ENCODE measurements at regions of chr18 and their contacts with region 1.

Region 1: DNA sequence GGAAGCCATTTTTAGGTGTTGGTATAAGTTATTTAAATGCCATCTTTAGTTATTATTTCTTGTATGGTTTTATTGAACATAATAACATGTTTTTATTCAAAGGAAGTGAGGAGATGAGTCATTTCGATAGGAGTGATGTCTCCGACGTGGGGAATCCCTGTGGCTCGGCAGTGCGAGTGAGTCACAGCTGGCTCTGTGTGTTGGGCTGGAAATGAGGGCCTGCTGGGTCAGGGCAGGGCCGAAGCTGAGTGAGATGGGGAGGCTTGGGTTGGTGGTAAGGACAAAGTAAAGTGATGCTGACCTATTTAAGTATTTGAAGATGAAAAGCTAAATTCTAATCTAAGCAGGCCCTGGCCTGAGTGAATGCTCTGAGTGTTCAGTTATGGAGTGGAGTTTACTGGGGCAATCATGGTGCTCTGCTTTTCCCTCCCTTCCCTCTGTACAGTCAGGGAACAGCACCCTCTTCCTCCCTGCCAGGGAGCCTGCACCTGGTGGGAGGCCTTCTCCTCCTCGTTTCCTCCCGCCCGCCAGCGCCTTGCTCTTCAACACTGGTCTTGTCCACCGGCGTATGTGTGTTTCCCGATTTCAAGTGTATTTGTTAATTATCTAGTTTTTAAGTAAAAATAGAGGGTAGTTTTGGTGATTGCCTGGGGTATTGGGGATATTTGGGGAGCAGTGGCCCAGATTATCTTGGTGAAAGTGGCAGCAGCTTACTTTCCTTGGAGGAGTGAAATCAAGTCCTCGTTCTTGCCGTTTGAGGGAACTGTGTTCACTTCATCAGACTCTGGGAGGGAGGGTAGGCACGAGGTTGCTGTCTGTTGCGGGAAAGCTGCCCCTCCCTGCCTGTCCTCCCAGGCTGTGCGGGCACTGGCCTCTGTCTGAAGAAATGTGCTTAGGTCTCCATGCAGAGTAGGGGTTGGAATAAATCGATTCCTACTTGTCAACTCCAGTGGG is 157.0 kb downstream of the LDLRAD4 start:
- DNase-seq: peak; percentile 55 to 92 (median 74)
- ATAC-seq: peak; percentile 69
- H3K4me3 ChIP-seq: peak overlapping the region; percentile 35
- H3K4me3 Mint-ChIP-seq: peak overlapping the region; percentile 86
- H3K27ac ChIP-seq: peak overlapping the region; percentile 89 to 92
- H3K27ac Mint-ChIP-seq: peak overlapping the region; percentile 90
- H3K4me1 ChIP-seq: peaks cover 81% of the 10 kb centered on the region
- H3K4me1 Mint-ChIP-seq: peaks cover 78% of the 10 kb centered on the region
- H3K27me3 ChIP-seq: no peaks in the 10 kb centered on the region
- H3K27me3 Mint-ChIP-seq: no peaks in the 10 kb centered on the region
- CTCF ChIP-seq: no peak

Region 2: GRCh38 chr18:13268158-13269012 is 107.2 kb before region 1 on chr18:
- CTCF ChIA-PET with region 1: interaction called, 3 read pairs
- POLR2A ChIA-PET with region 1: no interaction called
- intact Hi-C with region 1: loop called in 1 of 2 experiments (anchors 5 kb)
- DNase-seq: no peak
- ATAC-seq: no peak
- H3K4me3 ChIP-seq: no peak overlapping the region
- H3K4me3 Mint-ChIP-seq: peak overlapping the region; percentile 67
- H3K27ac ChIP-seq: no peak overlapping the region
- H3K27ac Mint-ChIP-seq: peak overlapping the region; percentile 82
- H3K4me1 ChIP-seq: peaks cover 57% of the 10 kb centered on the region
- H3K4me1 Mint-ChIP-seq: peaks cover 73% of the 10 kb centered on the region
- H3K27me3 ChIP-seq: no peaks in the 10 kb centered on the region
- H3K27me3 Mint-ChIP-seq: no peaks in the 10 kb centered on the region
- CTCF ChIP-seq: no peak

Region 3: DNA sequence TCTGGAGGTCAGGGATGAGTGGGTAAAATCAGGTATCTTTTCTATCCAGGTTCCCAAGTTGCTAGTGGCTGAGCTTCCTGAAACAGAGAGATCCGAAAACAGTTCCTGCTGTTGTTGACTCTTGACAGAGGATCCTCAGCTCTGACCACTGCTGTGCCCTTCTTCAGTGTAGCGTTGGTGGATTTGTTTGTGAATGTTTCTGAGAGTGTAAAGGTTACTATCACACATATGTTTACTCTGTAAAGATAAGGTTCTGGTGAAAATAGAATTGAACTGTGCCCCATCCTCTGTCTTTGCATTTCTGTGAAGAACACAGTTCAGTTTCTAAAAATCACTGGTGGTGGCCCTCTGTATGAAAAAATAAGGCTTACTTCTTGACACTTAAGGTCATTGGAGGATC is 37.3 kb before region 1 on chr18:
- CTCF ChIA-PET with region 1: no interaction called
- POLR2A ChIA-PET with region 1: no interaction called
- intact Hi-C with region 1: no loop called
- DNase-seq: no peak
- ATAC-seq: no peak
- H3K4me3 ChIP-seq: no peak overlapping the region
- H3K4me3 Mint-ChIP-seq: no peak overlapping the region
- H3K27ac ChIP-seq: no peak overlapping the region
- H3K27ac Mint-ChIP-seq: no peak overlapping the region
- H3K4me1 ChIP-seq: no peaks in the 10 kb centered on the region
- H3K4me1 Mint-ChIP-seq: peaks cover 32% of the 10 kb centered on the region
- H3K27me3 ChIP-seq: no peaks in the 10 kb centered on the region
- H3K27me3 Mint-ChIP-seq: no peaks in the 10 kb centered on the region
- CTCF ChIP-seq: no peak

Region 4: DNA sequence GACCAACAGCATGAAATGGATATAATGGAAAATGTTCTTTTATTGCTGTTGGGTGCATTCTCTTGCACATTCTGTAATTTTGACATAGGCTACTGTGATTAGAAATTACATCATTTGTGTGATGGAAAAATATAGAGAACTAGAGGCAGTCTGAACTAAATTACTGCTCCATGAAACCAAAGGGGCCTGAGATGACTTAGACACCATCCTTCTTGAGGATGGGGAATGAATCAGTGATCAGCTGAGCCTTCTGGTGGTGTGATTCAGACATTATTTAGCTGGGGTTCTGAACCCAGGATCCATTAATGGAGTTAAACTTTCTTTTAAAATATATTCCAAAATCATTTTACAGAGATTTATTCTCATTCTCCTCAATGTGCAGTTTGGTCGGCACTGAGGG is 21.2 kb before region 1 on chr18:
- CTCF ChIA-PET with region 1: no interaction called
- POLR2A ChIA-PET with region 1: interaction called, 6 read pairs
- intact Hi-C with region 1: loop called in 1 of 2 experiments (anchors 2 kb)
- DNase-seq: no peak
- ATAC-seq: no peak
- H3K4me3 ChIP-seq: no peak overlapping the region
- H3K4me3 Mint-ChIP-seq: no peak overlapping the region
- H3K27ac ChIP-seq: no peak overlapping the region
- H3K27ac Mint-ChIP-seq: no peak overlapping the region
- H3K4me1 ChIP-seq: peaks cover 11% of the 10 kb centered on the region
- H3K4me1 Mint-ChIP-seq: peaks cover 35% of the 10 kb centered on the region
- H3K27me3 ChIP-seq: no peaks in the 10 kb centered on the region
- H3K27me3 Mint-ChIP-seq: no peaks in the 10 kb centered on the region
- CTCF ChIP-seq: no peak

Region 5: DNA sequence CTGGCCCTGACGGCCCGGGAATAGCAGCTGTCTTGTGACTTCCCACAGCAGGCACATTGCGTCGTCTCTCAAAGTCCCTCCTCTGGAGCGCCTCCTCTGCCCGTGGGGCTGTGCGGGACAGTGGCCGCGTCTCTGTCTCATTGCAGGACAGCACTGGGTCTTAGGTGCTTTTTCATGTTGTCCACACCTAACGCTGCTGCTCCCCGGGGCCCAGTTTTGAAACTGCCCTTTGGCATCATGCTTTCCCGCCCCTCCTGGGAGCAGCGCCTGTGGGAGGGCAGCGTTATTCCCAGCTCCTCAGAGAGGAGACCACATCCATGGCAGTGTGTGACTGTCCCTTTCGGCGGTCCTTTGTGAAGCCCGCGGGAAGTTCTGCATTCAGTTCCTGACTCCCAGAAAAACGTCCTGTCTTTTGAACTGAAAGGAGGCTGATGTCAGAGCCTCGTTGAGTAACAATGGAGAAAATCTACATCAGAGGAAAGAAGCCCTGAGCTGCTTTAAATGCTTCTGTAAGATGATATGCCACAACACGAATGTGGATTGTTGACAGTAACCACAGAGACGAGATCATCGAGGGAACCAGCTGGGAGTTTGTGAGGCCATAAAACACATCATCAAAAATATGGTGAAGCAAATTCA is 124.8 kb after region 1 on chr18:
- CTCF ChIA-PET with region 1: no interaction called
- POLR2A ChIA-PET with region 1: no interaction called
- intact Hi-C with region 1: loop called in 1 of 2 experiments (anchors 10 kb)
- DNase-seq: peak in 1 of 14 experiments; percentile 23
- ATAC-seq: peak; percentile 42
- H3K4me3 ChIP-seq: no peak overlapping the region
- H3K4me3 Mint-ChIP-seq: no peak overlapping the region
- H3K27ac ChIP-seq: no peak overlapping the region
- H3K27ac Mint-ChIP-seq: peak overlapping the region; percentile 73
- H3K4me1 ChIP-seq: peaks cover 18% of the 10 kb centered on the region
- H3K4me1 Mint-ChIP-seq: peaks cover 36% of the 10 kb centered on the region
- H3K27me3 ChIP-seq: no peaks in the 10 kb centered on the region
- H3K27me3 Mint-ChIP-seq: no peaks in the 10 kb centered on the region
- CTCF ChIP-seq: no peak

Region 6: DNA sequence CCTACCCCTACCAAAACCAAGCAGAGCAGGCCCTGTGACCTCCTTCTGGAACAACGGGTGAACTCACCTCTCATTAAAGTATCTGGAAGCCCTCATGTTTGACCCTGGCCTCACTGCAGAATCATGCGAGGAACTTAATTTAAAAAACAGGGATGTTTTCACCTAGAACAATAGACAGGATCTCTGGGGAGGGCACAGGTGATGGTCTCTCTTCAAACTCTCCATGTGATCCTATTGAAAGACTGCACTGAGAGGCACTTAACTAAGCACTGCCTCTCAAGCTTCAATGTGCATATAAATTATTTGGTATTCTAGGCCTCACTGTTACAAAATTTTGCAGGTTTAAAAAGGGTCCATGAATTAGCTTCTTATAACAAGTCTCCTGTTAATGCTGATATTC is 749.1 kb after region 1 on chr18:
- CTCF ChIA-PET with region 1: no interaction called
- POLR2A ChIA-PET with region 1: no interaction called
- intact Hi-C with region 1: loop called in 1 of 2 experiments (anchors 10 kb)
- DNase-seq: no peak
- ATAC-seq: no peak
- H3K4me3 ChIP-seq: no peak overlapping the region
- H3K4me3 Mint-ChIP-seq: no peak overlapping the region
- H3K27ac ChIP-seq: no peak overlapping the region
- H3K27ac Mint-ChIP-seq: no peak overlapping the region
- H3K4me1 ChIP-seq: no peaks in the 10 kb centered on the region
- H3K4me1 Mint-ChIP-seq: peaks cover 9% of the 10 kb centered on the region
- H3K27me3 ChIP-seq: no peaks in the 10 kb centered on the region
- H3K27me3 Mint-ChIP-seq: no peaks in the 10 kb centered on the region
- CTCF ChIP-seq: no peak

Measured in CD4-positive, alpha-beta T cell (primary cell).